GM12878 (cell line): ENCODE measurements at regions of chr20 and their contacts with region 1.

Region 1: GRCh38 chr20:32652739-32653526 is 20.8 kb downstream of the C20orf203 start:
- DNase-seq: no peak
- ATAC-seq: peak; percentile 98
- H3K4me3 ChIP-seq: no peak overlapping the region
- H3K27ac ChIP-seq: no peak overlapping the region
- H3K4me1 ChIP-seq: no peaks in the 10 kb centered on the region; the same call in 1 of the 2 replicates
- H3K27me3 ChIP-seq: no peaks in the 10 kb centered on the region
- CTCF ChIP-seq: peak; percentile 91 to 98 (median 93)
- EP300 ChIP-seq: no peak
- POLR2A ChIP-seq: no peak
- RAD21 ChIP-seq: peak; percentile 100

Region 2: GRCh38 chr20:31822421-31823330 is 830.3 kb before region 1 on chr20:
- CTCF ChIA-PET with region 1: interaction called, 8 read pairs
- POLR2A ChIA-PET with region 1: no interaction called
- RAD21 ChIA-PET with region 1: no interaction called
- SMC1A ChIA-PET with region 1: no interaction called
- in situ Hi-C with region 1: loop called (anchors 10 kb)
- intact Hi-C with region 1: no loop called
- DNase-seq: no peak
- ATAC-seq: peak; percentile 97
- H3K4me3 ChIP-seq: no peak overlapping the region
- H3K27ac ChIP-seq: no peak overlapping the region
- H3K4me1 ChIP-seq: no peaks in the 10 kb centered on the region
- H3K27me3 ChIP-seq: no peaks in the 10 kb centered on the region
- CTCF ChIP-seq: peak; percentile 96 to 98 (median 98); a peak in 5 of 6 replicates
- EP300 ChIP-seq: no peak
- POLR2A ChIP-seq: no peak
- RAD21 ChIP-seq: peak; percentile 86

Region 3: GRCh38 chr20:32497589-32498224 is 155.2 kb before region 1 on chr20:
- CTCF ChIA-PET with region 1: interaction called, 10 read pairs
- POLR2A ChIA-PET with region 1: no interaction called
- RAD21 ChIA-PET with region 1: no interaction called
- SMC1A ChIA-PET with region 1: no interaction called
- in situ Hi-C with region 1: no loop called
- intact Hi-C with region 1: no loop called
- DNase-seq: no peak
- ATAC-seq: no peak
- H3K4me3 ChIP-seq: no peak overlapping the region
- H3K27ac ChIP-seq: no peak overlapping the region
- H3K4me1 ChIP-seq: no peaks in the 10 kb centered on the region
- H3K27me3 ChIP-seq: no peaks in the 10 kb centered on the region
- CTCF ChIP-seq: no peak
- EP300 ChIP-seq: no peak
- POLR2A ChIP-seq: no peak
- RAD21 ChIP-seq: no peak

Region 4: DNA sequence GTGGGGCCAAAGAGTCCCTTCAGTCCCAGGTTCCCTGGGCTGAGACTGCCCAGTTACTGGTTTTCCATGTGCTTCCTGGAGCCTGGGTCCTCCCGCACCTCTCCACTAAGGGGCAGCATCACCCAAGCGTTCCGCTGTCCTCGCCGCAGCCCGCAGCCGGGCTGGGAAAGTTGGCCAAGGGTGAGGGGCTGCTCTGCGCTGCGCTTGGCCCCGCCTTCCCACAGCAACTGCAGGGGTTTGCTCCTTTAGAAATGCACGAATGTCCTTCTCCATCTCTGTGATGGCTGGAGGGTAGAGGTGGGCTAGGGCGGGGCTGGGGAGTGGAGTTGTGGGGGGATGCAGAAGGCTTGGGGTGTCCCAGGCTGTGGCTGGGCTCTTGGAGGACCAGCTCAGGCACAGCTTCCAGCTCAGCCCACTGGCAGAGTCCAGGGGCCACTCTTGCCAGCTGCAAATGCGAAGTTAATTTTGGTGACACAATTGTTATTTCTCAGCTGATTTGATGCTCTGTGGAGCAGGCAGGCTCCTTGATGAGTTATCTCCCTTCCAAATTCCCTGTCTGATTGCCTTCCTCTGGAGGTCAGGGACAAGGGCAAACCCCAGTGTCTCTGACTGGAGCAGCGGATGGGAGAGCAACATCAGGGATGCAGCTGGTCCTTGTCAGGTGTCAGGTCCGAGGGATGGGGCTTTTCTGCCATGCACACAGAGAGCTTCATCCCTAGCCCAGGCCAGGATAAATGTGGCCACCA is 131.0 kb before region 1 on chr20:
- CTCF ChIA-PET with region 1: interaction called, 264 read pairs
- POLR2A ChIA-PET with region 1: interaction called, 16 read pairs
- RAD21 ChIA-PET with region 1: interaction called, 186 read pairs
- SMC1A ChIA-PET with region 1: interaction called, 248 read pairs
- in situ Hi-C with region 1: loop called (anchors 5 kb)
- intact Hi-C with region 1: loop called (anchors 1 kb)
- DNase-seq: no peak
- ATAC-seq: peak; percentile 87
- H3K4me3 ChIP-seq: no peak overlapping the region
- H3K27ac ChIP-seq: no peak overlapping the region
- H3K4me1 ChIP-seq: peaks cover 20% of the 10 kb centered on the region
- H3K27me3 ChIP-seq: no peaks in the 10 kb centered on the region
- CTCF ChIP-seq: peak; percentile 83 to 93 (median 83)
- EP300 ChIP-seq: no peak
- POLR2A ChIP-seq: no peak
- RAD21 ChIP-seq: peak; percentile 97

Region 5: GRCh38 chr20:32585011-32585518 is 67.9 kb before region 1 on chr20 and contains the start of gene NOL4L:
- CTCF ChIA-PET with region 1: interaction called, 5 read pairs
- POLR2A ChIA-PET with region 1: no interaction called
- RAD21 ChIA-PET with region 1: interaction called, 5 read pairs
- SMC1A ChIA-PET with region 1: interaction called, 10 read pairs
- in situ Hi-C with region 1: no loop called
- intact Hi-C with region 1: loop called (anchors 10 kb)
- DNase-seq: no peak
- ATAC-seq: peak; percentile 7
- H3K4me3 ChIP-seq: peak within 1 kb of the TSS; percentile 76; the same call in 1 of the 2 replicates
- H3K27ac ChIP-seq: no peak within 1 kb of the TSS
- H3K4me1 ChIP-seq: peaks cover 17% of the 10 kb centered on the region
- H3K27me3 ChIP-seq: peaks cover 0 to 2% of the 10 kb centered on the region in 2 experiments; a peak in 1 of 4 replicates
- CTCF ChIP-seq: no peak
- EP300 ChIP-seq: no peak
- POLR2A ChIP-seq: 0 out of 2 replicates have a peak, but pooled peaks have one; percentile 2
- RAD21 ChIP-seq: no peak
- polyA plus RNA-seq, gene NOL4L: 2.3 to 3.9 TPM

Region 6: GRCh38 chr20:32626859-32627636 is 25.9 kb before region 1 on chr20:
- CTCF ChIA-PET with region 1: interaction called, 29 read pairs
- POLR2A ChIA-PET with region 1: no interaction called
- RAD21 ChIA-PET with region 1: interaction called, 7 read pairs
- SMC1A ChIA-PET with region 1: interaction called, 4 read pairs
- in situ Hi-C with region 1: no loop called
- intact Hi-C with region 1: no loop called
- DNase-seq: no peak
- ATAC-seq: peak; percentile 64
- H3K4me3 ChIP-seq: 0 out of 2 replicates have a peak overlapping the region, but pooled peaks have one; percentile 20
- H3K27ac ChIP-seq: no peak overlapping the region
- H3K4me1 ChIP-seq: peaks cover 13% of the 10 kb centered on the region
- H3K27me3 ChIP-seq: no peaks in the 10 kb centered on the region; a peak in 2 of 4 replicates
- CTCF ChIP-seq: no peak
- EP300 ChIP-seq: no peak
- POLR2A ChIP-seq: no peak
- RAD21 ChIP-seq: no peak

Region 7: DNA sequence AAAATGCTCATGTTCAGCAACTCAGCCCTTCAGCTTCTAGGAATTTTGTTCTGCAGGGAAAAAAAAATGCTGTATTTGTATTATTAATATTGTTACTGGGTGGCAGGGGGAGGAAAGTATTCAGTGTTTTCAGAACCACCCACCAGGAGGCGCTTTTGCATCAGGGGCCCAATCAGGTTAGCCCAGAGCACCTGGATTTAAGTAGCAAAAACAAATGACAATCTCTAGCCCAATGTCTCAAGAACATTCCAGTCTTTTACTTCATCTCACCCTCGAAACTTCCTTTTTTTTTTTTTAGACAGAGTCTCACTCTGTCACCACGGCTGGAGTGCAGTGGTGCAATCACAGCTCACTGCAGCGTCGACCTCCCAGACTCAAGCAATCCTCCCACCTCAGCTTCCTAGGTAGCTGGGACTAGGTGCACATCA is 21.4 kb after region 1 on chr20:
- CTCF ChIA-PET with region 1: interaction called, 17 read pairs
- POLR2A ChIA-PET with region 1: no interaction called
- RAD21 ChIA-PET with region 1: interaction called, 7 read pairs
- SMC1A ChIA-PET with region 1: interaction called, 10 read pairs
- in situ Hi-C with region 1: no loop called
- intact Hi-C with region 1: no loop called
- DNase-seq: no peak
- ATAC-seq: peak; percentile 69
- H3K4me3 ChIP-seq: no peak overlapping the region
- H3K27ac ChIP-seq: no peak overlapping the region
- H3K4me1 ChIP-seq: peaks cover 38% of the 10 kb centered on the region
- H3K27me3 ChIP-seq: no peaks in the 10 kb centered on the region
- CTCF ChIP-seq: peak; percentile 74 to 86 (median 85)
- EP300 ChIP-seq: no peak
- POLR2A ChIP-seq: no peak
- RAD21 ChIP-seq: peak; percentile 94